Activated T-helper 1 cell treated with anti-CD3 and anti-CD28 coated beads, Interleukin-12 subunit alpha, Interleukin-12 subunit beta, Interleukin-2, Interleukin-4 antibody, amounts not matched to agents 30 ng/mL and 10 ng/mL and 1 ng/mL, durations not matched to agents 14 hours and 24 hours and 36 hours (primary cell): ENCODE measurements at regions of chr17 and their contacts with region 1.

Region 1: DNA sequence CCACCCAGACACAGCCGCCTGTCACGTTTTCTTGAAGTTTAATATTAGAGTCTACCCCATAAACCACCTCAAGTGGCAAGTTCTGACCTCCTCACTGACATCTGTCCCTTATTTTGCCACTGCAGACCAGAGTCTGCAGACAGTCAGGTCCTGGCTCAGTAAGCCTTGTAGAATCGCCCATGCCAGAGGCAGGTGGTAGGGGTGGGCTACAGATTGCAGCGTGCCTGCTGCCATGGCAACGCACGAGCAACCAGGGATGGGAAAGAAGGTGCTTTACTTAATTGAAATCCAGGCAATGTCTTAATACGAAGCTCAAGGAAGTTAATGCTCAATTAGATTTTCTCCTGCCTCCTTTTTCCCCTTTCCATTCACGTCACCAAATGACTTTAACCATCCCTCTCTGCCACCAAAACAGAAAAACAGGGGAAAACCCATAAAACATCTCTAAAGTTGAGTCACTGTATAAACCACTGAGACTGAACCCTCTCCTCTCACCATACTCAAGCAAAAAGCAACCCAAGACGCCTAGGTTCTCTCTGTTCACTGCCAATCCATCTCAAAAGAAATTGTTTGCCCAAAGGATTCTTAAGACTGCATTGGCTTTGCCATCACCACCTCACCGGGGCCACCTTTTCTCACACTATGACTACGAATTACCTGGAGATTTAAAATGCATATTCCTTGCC is 228.8 kb downstream of the SLC39A11 start:
- DNase-seq: no peak
- H3K4me3 Mint-ChIP-seq: no peak overlapping the region
- H3K27ac Mint-ChIP-seq: peak overlapping the region; percentile 69
- H3K4me1 Mint-ChIP-seq: peaks cover 46% of the 10 kb centered on the region
- H3K27me3 Mint-ChIP-seq: no peaks in the 10 kb centered on the region

Region 2: DNA sequence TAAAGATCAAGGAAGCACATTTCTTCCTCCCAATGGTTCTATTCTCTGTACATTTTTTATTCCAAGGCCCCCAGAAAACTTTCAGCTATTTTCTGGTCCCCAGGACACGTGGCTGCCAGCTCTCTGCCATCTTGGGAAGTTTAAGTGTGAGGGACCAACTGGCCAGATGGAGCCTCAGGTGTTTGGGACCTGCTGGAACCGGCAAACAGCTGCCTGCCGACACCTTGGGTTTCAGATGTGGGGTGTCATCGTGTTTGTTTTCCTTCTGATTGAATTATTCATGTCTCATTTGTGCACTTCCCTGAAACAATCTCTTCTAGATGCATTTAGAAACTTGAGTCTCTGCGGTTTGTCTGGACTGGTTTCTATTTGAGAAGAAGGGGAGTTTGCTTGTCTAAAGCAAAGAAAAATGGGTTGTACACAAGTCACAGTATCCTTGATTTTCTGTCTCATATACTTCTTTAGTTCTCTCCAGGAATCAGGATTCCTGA is 157.7 kb before region 1 on chr17:
- intact Hi-C with region 1: loop called (anchors 5 kb)
- DNase-seq: no peak
- H3K4me3 Mint-ChIP-seq: peak overlapping the region; percentile 45
- H3K27ac Mint-ChIP-seq: peak overlapping the region; percentile 89
- H3K4me1 Mint-ChIP-seq: peaks cover 58% of the 10 kb centered on the region
- H3K27me3 Mint-ChIP-seq: no peaks in the 10 kb centered on the region

Region 3: DNA sequence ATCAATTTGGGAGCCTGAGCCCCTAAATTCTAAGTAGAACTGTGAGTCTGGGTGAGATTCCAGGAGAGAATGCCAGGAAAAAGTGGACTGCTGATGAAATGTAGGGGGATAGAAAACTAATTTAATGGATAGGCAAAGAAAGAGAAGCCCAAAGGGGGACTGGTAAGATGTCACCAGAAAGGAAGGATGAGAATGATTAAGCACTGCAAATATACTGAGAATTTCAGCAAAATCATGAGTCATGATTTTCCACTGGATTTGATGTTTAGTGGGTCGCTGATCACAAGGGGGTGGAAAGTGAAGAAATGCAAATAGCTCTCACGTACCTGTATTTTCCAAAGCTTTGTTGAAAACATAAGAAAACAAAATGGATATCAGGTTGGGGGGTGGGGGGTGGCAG is 27.0 kb after region 1 on chr17:
- intact Hi-C with region 1: loop called (anchors 2 kb)
- DNase-seq: no peak
- H3K4me3 Mint-ChIP-seq: no peak overlapping the region
- H3K27ac Mint-ChIP-seq: peak overlapping the region; percentile 59
- H3K4me1 Mint-ChIP-seq: peaks cover 16% of the 10 kb centered on the region
- H3K27me3 Mint-ChIP-seq: no peaks in the 10 kb centered on the region

Region 4: GRCh38 chr17:72997559-72997958 is 133.9 kb after region 1 on chr17:
- intact Hi-C with region 1: loop called (anchors 10 kb)
- DNase-seq: no peak
- H3K4me3 Mint-ChIP-seq: no peak overlapping the region
- H3K27ac Mint-ChIP-seq: no peak overlapping the region
- H3K4me1 Mint-ChIP-seq: peaks cover 9% of the 10 kb centered on the region
- H3K27me3 Mint-ChIP-seq: no peaks in the 10 kb centered on the region

Region 5: DNA sequence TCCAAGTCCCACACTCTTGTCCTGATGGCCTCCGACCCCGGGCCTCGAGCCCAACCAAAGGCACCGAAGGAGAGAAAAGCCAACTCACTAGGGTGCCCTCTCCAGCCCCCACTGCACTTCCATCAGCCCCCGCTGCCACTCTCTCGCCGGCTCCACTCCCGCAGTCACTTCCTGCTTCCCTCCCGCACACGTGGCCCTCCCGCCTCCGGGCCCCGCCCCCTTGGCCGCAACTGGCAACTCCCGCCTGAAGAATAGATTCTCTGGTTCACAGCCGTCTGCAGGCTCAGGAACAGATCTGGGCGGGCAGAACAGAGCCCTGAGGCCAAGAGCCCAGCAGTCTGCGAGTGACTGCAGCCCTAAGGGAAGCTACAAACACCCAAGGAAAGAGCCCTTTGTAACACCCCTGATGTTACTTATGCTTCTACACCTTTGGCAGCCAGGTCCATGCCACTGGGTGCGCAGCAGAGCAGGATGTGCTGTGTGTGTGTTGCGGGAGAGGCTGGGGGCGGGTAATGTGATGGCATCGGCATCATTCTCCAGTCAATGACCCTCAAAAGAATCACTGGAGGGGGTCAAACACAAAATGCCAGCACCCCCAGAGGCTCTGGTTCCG is 229.0 kb after region 1 on chr17 and contains the start of gene SLC39A11:
- intact Hi-C with region 1: loop called (anchors 1 kb)
- DNase-seq: peak; percentile 89
- H3K4me3 Mint-ChIP-seq: peak within 1 kb of the TSS; percentile 100
- H3K27ac Mint-ChIP-seq: peak within 1 kb of the TSS; percentile 98
- H3K4me1 Mint-ChIP-seq: peaks cover 22% of the 10 kb centered on the region
- H3K27me3 Mint-ChIP-seq: peaks cover 6% of the 10 kb centered on the region
- total RNA-seq, gene SLC39A11: 20.9 and 25.7 TPM in 2 replicates